ENCODE measurements at regions of chr11 and their contacts with region 1.

Region 1: GRCh38 chr11:10933455-10934292 is 75.8 kb upstream of the ZBED5 start:
- DNase-seq: peak; percentile 94
- H3K4me3 ChIP-seq: peak overlapping the region; percentile 14 to 73 (median 20)
- H3K27ac ChIP-seq: no peak overlapping the region
- H3K4me1 ChIP-seq: peaks cover 12% of the 10 kb centered on the region
- H3K27me3 ChIP-seq: peaks cover 0 to 12% of the 10 kb centered on the region in 2 experiments
- CTCF ChIP-seq: peak; percentile 85 to 92
- POLR2A ChIP-seq: no peak

Region 2: DNA sequence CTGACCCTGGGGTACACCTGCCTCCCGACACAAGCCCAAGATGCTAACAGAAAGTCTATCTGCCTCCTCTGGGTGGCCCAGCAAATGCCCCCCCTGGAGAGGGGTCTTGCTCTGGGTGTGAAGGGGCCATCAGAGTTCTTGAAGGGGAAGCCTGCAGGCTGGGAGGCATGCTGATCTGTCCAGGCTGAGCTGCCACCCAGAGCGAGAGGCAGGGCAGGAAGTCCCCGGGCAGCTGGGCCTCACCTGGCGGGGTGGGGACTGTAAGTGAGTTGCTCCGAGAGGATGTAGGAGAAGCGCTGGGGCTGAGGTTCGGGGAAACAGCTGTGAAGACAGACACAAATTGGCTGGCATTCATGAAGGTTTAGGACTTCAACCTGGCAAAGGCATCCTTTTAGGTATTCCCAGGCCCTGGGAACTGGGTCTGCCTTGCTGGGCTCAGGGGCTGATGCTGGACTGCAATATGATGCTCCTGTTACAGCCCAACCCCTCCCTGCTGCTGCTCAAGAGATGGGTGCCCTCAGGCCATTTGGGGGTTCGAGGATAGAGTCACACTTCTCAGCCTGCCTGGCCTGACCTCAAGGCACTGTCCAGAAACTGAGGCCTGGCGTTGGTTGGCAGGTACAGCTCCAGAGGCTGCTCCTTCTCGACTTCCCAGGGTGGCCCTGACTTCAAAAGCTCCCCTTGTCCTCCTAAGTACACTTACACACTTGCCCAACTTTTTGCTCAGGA is 305.0 kb before region 1 on chr11:
- CTCF ChIA-PET with region 1: no interaction called
- POLR2A ChIA-PET with region 1: no interaction called
- dilution Hi-C with region 1: no loop called
- intact Hi-C with region 1: no loop called
- DNase-seq: no peak
- H3K4me3 ChIP-seq: no peak overlapping the region
- H3K27ac ChIP-seq: no peak overlapping the region
- H3K4me1 ChIP-seq: no peaks in the 10 kb centered on the region
- H3K27me3 ChIP-seq: peaks cover 0 to under 1% of the 10 kb centered on the region in 2 experiments
- CTCF ChIP-seq: no peak
- POLR2A ChIP-seq: no peak

Region 3: DNA sequence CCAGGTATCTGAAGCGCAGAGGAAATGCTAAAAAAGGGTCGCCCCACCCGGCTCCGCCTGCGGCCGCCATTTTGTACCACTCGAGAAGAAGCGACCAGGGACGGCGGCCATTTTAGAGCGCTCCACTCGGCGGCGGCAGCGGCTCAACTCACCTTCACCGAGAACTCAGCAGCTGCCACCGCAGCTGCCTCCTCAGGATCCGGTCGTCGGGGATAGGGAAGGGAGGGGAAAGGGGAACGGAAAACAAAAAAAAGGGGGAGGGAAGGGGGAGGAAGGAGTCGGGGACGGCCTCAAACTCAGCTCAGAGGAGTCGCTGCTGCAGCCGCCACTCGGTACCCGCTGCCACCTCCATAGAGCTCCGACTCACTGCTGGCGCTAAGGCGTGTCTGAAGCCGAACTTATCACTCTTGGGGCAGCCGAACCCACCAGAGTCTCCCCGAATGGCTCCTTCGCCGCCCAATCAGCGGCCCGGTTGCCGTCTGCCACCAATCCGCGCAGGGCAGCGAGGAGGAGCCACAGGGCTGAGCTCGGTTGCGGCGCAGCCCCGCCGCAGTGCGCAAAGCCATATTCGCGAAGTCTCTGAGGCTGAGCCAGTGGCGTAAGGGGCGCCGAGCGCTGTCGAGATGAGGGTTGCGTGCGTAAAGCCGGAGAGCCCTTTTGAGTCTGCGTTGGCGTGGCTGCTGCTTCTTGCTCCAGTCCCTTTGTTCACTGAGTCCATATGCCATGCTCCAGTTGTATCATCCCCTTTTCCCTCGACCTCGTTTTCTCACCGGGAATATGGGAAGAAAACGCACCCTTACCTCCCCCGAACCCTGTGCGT is 124.9 kb before region 1 on chr11 and contains the start of gene EIF4G2:
- CTCF ChIA-PET with region 1: interaction called, 15 read pairs
- POLR2A ChIA-PET with region 1: interaction called, 37 read pairs
- dilution Hi-C with region 1: no loop called
- intact Hi-C with region 1: loop called (anchors 1 kb)
- DNase-seq: peak; percentile 99
- H3K4me3 ChIP-seq: peak within 1 kb of the TSS; percentile 88 to 97 (median 97)
- H3K27ac ChIP-seq: peak within 1 kb of the TSS; percentile 97
- H3K4me1 ChIP-seq: peaks cover 39% of the 10 kb centered on the region
- H3K27me3 ChIP-seq: no peaks in the 10 kb centered on the region
- CTCF ChIP-seq: no peak
- POLR2A ChIP-seq: peak; percentile 100
- total RNA-seq, gene EIF4G2: 1,175 and 1,194 TPM in 2 replicates

Region 4: DNA sequence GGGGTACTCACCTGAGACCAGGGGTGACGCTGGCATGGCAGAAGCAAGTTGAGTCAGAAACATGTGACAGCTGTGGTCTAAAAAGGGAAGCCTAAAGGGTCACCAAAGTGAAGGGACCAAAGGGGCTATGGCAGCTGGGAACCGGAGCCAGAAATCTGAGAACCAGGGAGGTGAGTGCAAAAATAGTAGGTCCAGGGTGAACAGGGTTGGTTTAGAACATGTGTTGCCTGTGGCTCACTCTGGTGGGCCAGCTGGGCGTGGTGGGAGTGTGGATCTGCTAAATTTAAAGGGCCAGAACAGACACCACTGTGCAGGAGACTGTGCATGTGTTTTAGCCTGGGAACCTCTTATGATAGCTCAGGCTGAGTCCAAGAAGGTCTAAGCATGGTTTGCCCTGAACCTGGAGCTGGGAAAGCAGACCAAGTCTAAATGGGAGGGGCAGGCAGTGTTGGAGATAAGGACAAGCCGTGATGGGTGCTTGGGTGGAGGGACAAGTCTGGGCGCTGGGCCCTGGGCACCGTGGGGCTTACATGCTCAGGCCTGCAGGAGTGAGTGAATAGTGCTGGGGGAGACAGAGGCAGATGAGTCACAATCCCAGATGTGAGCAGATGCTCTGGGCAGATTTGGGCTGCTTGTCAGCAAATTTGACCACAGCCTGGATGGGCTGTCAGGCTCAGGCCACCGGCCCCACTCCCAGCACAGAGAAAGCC is 34.4 kb before region 1 on chr11:
- CTCF ChIA-PET with region 1: interaction called, 23 read pairs
- POLR2A ChIA-PET with region 1: interaction called, 6 read pairs
- dilution Hi-C with region 1: no loop called
- intact Hi-C with region 1: loop called (anchors 1 kb)
- DNase-seq: no peak
- H3K4me3 ChIP-seq: no peak overlapping the region
- H3K27ac ChIP-seq: peak overlapping the region; percentile 95
- H3K4me1 ChIP-seq: peaks cover 25% of the 10 kb centered on the region
- H3K27me3 ChIP-seq: no peaks in the 10 kb centered on the region
- CTCF ChIP-seq: no peak
- POLR2A ChIP-seq: no peak

Region 5: GRCh38 chr11:11010624-11011127 is 77.0 kb after region 1 on chr11:
- CTCF ChIA-PET with region 1: interaction called, 48 read pairs
- POLR2A ChIA-PET with region 1: no interaction called
- dilution Hi-C with region 1: no loop called
- intact Hi-C with region 1: loop called (anchors 1 kb)
- DNase-seq: peak; percentile 23
- H3K4me3 ChIP-seq: no peak overlapping the region
- H3K27ac ChIP-seq: no peak overlapping the region
- H3K4me1 ChIP-seq: no peaks in the 10 kb centered on the region
- H3K27me3 ChIP-seq: peaks cover 15 to 36% of the 10 kb centered on the region in 2 experiments
- CTCF ChIP-seq: peak; percentile 12 to 36
- POLR2A ChIP-seq: no peak

Region 6: DNA sequence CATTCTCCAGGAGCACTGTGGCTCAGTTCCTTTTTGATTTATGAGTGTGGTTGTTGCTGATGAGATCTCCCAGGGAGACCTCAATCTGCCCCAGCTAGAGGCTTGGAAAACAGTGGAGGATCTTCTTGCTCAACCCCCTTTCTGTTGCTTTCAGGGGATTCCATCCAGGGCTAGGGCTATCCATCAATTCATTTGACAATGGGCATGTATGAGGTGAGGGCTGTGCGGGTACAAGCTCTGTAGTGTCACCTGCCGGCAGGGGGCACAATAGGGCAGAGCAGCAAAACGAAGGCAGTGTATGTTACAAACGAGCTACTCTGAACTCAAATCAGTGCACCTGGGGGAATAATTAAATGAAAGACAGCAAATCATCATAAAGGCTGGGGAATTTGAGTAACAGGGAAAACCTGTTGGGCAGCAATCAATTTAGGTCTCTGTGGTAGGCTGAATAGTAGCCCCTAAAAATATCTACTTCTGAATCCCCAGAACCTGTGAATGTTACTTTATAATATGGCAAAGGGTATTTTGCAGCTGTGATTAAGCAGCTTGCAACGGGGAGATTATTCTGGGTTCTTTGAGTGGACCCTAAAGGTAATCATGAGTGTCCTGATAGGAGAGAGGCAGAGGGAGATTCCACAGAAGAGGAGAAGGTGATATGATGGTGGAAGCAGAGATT is 94.5 kb after region 1 on chr11:
- CTCF ChIA-PET with region 1: interaction called, 123 read pairs
- POLR2A ChIA-PET with region 1: no interaction called
- dilution Hi-C with region 1: no loop called
- intact Hi-C with region 1: no loop called
- DNase-seq: peak; percentile 52
- H3K4me3 ChIP-seq: no peak overlapping the region
- H3K27ac ChIP-seq: no peak overlapping the region
- H3K4me1 ChIP-seq: peaks cover 8% of the 10 kb centered on the region
- H3K27me3 ChIP-seq: peaks cover 4 to 6% of the 10 kb centered on the region in 2 experiments
- CTCF ChIP-seq: peak; percentile 70 to 81
- POLR2A ChIP-seq: no peak

Region 7: DNA sequence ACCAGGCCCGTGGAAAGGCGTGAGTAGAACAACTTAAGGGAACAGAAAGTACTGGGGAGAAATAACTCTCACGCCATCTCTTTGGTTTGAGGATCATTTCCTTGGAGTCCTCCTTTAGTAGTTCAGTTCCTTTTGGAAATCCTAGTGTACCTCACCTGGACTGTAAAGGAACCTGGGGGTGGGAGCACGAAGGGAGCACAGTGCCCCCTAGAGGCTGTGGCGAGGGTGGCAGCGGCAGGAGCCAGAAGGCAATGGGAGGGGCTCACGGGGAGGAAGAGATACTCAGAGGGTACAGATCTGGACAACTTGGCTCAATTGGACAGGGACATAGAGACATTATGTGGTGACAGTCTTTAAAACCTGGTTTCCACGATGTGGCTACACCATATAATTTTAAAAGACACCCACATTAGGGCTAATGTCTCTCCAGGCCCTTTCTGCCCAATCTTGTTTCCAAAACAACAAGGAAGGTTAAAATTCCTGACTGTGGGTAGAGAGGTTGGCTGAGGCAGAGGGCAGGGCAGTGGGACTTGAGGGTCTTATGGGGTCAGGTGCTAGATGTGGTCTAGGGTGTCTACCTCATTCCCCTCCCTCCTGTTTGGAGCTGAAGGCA is 332.4 kb after region 1 on chr11:
- CTCF ChIA-PET with region 1: interaction called, 3 read pairs
- POLR2A ChIA-PET with region 1: no interaction called
- dilution Hi-C with region 1: no loop called
- intact Hi-C with region 1: loop called (anchors 5 kb)
- DNase-seq: no peak
- H3K4me3 ChIP-seq: no peak overlapping the region
- H3K27ac ChIP-seq: no peak overlapping the region
- H3K4me1 ChIP-seq: no peaks in the 10 kb centered on the region
- H3K27me3 ChIP-seq: no peaks in the 10 kb centered on the region
- CTCF ChIP-seq: peak; percentile 65 to 84
- POLR2A ChIP-seq: no peak